Naive thymus-derived CD8-positive, alpha-beta T cell (primary cell): ENCODE measurements at regions of chr9 and their contacts with region 1.

Region 1: GRCh38 chr9:15510789-15511575 is at the start of gene PSIP1:
- DNase-seq: peak; percentile 77 to 98 (median 87)
- ATAC-seq: peak; percentile 82 to 89
- H3K4me3 Mint-ChIP-seq: peak within 1 kb of the TSS; percentile 87 to 98 (median 96)
- H3K27ac Mint-ChIP-seq: peak within 1 kb of the TSS; percentile 97 to 100 (median 100)
- H3K4me1 Mint-ChIP-seq: peaks cover 32 to 63% (median 51%) of the 10 kb centered on the region in 4 donors
- H3K27me3 Mint-ChIP-seq: peaks cover 0 to 1% (median 0%) of the 10 kb centered on the region in 5 donors
- polyA plus RNA-seq, gene PSIP1: 113 to 163 (median 143) TPM

Region 2: DNA sequence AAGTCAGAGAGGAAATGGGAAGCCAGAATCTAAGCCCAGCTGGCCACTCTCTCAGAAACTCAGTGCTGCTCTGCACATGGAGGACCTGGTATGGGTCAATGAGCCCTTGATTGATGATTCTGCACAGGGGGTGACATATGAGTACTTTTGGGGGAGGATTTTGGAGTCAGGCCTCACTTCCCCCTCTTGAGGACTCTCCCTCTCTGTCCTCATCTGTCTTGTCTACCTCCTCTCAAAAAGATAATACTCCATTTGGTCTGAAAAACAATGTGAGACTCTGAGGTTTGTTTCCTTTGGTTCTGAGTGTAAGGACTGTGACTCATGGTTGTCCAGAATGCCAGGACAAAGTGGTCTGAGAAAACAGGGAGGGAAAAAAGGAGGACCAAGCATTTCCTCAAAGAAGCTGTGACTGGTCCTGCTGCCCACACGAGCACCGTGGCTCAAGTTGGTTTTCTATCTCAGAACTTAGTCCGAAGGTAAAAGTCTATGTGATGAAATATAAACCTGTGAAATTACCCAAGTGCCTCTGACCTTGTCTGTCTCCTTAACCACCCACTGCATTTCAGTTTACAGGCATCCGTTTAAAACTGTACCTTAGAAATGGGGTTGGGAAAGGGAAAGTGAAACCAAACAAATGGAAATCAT is 215.1 kb before region 1 on chr9:
- POLR2A ChIA-PET with region 1: interaction called, 19 read pairs
- DNase-seq: peak in 3 of 10 donors; percentile 44 to 66 (median 62)
- ATAC-seq: peak; percentile 14 to 43
- H3K4me3 Mint-ChIP-seq: peak overlapping the region; percentile 74 to 92 (median 84)
- H3K27ac Mint-ChIP-seq: peak overlapping the region; percentile 93 to 100 (median 97)
- H3K4me1 Mint-ChIP-seq: peaks cover 43 to 93% (median 84%) of the 10 kb centered on the region in 4 donors
- H3K27me3 Mint-ChIP-seq: no peaks in the 10 kb centered on the region

Region 3: GRCh38 chr9:15422372-15423230 is 88.4 kb before region 1 on chr9 and contains the start of gene SNAPC3:
- POLR2A ChIA-PET with region 1: interaction called, 11 read pairs
- DNase-seq: peak; percentile 87 to 95 (median 92)
- ATAC-seq: peak; percentile 93 to 96
- H3K4me3 Mint-ChIP-seq: peak within 1 kb of the TSS; percentile 89 to 95 (median 92)
- H3K27ac Mint-ChIP-seq: peak within 1 kb of the TSS; percentile 85 to 97 (median 94)
- H3K4me1 Mint-ChIP-seq: peaks cover 11 to 48% (median 32%) of the 10 kb centered on the region in 4 donors
- H3K27me3 Mint-ChIP-seq: no peaks in the 10 kb centered on the region
- polyA plus RNA-seq, gene SNAPC3: 8.6 to 12.1 (median 11.5) TPM

Region 4: DNA sequence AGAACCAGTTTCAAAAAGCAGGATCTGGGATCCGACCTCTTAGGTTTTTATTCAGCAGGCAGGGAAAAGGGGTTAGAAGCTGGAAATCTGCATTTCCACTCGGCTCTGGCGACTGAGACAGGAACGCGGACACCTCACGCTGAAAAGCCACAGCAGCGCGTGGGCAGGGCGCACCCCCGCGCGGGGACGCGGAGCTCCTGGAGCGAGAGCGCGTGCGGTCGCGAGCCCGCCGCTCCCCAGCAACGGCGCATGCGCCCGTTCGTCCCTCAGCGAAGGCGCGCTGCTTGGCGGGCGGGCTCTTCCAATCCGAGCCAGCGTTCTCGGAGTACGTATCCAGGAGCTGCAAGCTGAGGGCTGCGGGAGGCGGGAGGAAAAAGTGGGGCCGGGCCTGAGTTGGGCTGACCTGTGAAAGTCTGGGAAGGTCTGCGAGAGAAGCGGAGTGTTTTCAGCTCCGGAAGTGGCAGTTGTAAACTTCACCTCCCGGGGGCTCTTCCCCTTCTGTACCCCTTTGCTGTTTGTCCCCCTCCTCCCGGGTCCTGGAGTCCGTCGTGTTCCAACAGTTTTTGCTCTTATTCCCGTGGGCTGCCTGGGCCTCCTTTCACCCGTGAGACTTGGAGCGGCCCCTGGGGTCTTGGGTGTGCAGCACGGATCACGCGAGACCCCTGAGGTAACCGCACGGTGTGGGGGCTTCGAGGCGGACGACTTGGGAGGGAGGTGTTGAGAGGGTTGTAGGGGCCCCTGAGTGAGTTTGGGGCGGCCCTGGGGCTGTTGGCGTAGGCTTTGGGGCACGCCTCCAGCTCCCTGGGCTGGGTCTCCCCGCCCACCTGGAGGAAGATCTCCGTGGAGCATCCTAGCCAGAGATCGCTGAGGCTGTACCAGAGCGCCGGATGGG is 41.9 kb after region 1 on chr9 and contains the start of gene CCDC171:
- POLR2A ChIA-PET with region 1: interaction called, 76 read pairs
- DNase-seq: peak; percentile 79 to 91 (median 84)
- ATAC-seq: peak; percentile 82 to 86
- H3K4me3 Mint-ChIP-seq: peak within 1 kb of the TSS; percentile 88 to 97 (median 94)
- H3K27ac Mint-ChIP-seq: peak within 1 kb of the TSS; percentile 82 to 95 (median 94)
- H3K4me1 Mint-ChIP-seq: peaks cover 7 to 22% (median 16%) of the 10 kb centered on the region in 4 donors
- H3K27me3 Mint-ChIP-seq: no peaks in the 10 kb centered on the region
- polyA plus RNA-seq, gene CCDC171: 0.39 to 0.80 (median 0.48) TPM

Region 5: DNA sequence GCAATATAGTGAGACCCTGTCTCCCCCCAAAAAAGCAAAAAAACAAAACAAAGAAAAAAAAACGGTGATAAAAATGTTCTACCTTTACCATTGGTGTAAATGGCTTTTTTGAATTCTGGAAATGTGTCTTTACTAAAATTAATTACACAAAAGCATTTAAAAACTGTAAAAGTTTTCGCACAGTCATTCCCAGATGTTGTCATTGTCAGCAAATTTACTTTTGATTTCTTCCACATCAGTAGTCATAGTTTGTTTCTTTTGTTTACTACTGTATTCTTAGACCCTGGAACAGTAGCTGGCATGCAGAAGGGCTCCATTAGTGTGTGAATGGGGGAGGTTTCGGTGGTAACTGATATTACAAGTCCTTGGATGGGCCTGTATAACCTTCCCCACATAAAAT is 81.3 kb after region 1 on chr9:
- POLR2A ChIA-PET with region 1: no interaction called
- DNase-seq: no peak
- ATAC-seq: no peak
- H3K4me3 Mint-ChIP-seq: no peak overlapping the region
- H3K27ac Mint-ChIP-seq: peak overlapping the region in 1 of 10 donors; percentile 29
- H3K4me1 Mint-ChIP-seq: no peaks in the 10 kb centered on the region
- H3K27me3 Mint-ChIP-seq: no peaks in the 10 kb centered on the region

Region 6: GRCh38 chr9:15697446-15697851 is 186.5 kb after region 1 on chr9:
- POLR2A ChIA-PET with region 1: no interaction called
- DNase-seq: no peak
- ATAC-seq: no peak
- H3K4me3 Mint-ChIP-seq: no peak overlapping the region
- H3K27ac Mint-ChIP-seq: no peak overlapping the region
- H3K4me1 Mint-ChIP-seq: no peaks in the 10 kb centered on the region
- H3K27me3 Mint-ChIP-seq: no peaks in the 10 kb centered on the region